Upper lobe of right lung (tissue), 1 donor: ENCODE measurements at regions of chr6 and their contacts with region 1.

Region 1: DNA sequence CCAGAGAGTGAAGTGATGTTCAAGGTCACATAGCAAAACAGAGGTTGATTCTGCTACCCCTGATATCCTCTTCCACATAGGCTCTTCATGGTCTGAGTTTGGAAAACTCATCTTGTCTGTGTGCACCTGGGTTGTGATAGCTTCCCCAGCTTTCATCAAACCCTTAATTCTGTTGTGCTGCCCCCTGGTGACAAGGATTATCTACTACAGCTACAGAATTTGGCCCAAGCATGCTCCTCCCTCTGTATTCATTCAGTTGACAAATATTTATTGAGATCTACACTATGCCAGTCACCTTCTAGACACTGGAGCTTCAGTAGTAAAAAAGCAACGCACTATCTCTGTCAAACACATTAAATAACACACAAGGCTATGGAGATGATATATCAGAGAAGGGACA is 50.4 kb downstream of the SMPDL3A start:
- DNase-seq: no peak
- ATAC-seq: peak; percentile 94
- H3K4me3 ChIP-seq: no peak overlapping the region
- H3K27ac ChIP-seq: no peak overlapping the region
- H3K4me1 ChIP-seq: no peaks in the 10 kb centered on the region
- H3K27me3 ChIP-seq: no peaks in the 10 kb centered on the region
- CTCF ChIP-seq: peak; percentile 69

Region 2: DNA sequence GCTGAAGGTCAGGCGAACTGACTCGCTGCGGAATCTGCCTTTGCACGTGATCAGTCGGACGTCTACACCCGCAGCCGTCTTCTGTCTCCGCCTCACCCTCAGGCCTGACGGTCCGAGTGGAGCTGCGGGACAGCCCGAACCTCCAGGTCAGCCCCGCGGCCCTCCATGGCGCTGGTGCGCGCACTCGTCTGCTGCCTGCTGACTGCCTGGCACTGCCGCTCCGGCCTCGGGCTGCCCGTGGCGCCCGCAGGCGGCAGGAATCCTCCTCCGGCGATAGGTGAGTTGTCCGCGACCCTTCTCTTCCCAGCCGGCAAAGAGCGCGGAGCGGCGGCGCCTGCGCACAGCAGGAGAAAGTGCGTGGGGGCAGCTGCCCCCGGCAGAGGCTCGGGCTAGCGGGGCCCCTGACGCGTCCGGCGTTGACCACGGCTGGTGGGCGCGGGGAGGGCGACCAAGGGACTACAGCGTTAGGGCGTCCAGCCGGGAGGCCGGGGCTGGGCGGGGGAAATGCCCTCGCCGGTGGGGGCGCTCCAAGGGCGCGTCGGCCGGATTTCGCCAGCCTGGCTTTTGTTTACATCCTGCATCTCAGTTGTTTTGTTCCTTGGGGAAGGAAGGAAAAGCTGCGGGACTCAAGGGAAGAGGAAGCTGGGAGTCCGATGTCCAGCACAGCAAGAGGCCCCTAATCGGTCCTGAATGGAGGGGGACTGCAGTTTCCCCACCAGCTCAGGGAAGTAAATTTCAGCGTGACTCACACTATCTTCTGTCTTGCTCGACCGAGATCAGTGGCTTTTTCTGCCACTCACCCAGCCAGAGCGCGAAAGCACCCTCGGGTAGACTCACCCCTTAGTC is 50.1 kb before region 1 on chr6 and contains the start of gene SMPDL3A:
- intact Hi-C with region 1: loop called (anchors 10 kb)
- DNase-seq: peak; percentile 88
- ATAC-seq: peak; percentile 89
- H3K4me3 ChIP-seq: peak within 1 kb of the TSS; percentile 68
- H3K27ac ChIP-seq: peak within 1 kb of the TSS; percentile 92
- H3K4me1 ChIP-seq: peaks cover 20% of the 10 kb centered on the region
- H3K27me3 ChIP-seq: no peaks in the 10 kb centered on the region
- CTCF ChIP-seq: peak; percentile 46
- total RNA-seq, gene SMPDL3A: 19.6 TPM

Region 3: GRCh38 chr6:122956376-122956775 is 116.9 kb after region 1 on chr6:
- intact Hi-C with region 1: no loop called
- DNase-seq: no peak
- ATAC-seq: no peak
- H3K4me3 ChIP-seq: no peak overlapping the region
- H3K27ac ChIP-seq: no peak overlapping the region
- H3K4me1 ChIP-seq: no peaks in the 10 kb centered on the region
- H3K27me3 ChIP-seq: no peaks in the 10 kb centered on the region
- CTCF ChIP-seq: no peak